CD4-positive, alpha-beta T cell (primary cell): ENCODE measurements at regions of chr3 and their contacts with region 1.

Region 1: DNA sequence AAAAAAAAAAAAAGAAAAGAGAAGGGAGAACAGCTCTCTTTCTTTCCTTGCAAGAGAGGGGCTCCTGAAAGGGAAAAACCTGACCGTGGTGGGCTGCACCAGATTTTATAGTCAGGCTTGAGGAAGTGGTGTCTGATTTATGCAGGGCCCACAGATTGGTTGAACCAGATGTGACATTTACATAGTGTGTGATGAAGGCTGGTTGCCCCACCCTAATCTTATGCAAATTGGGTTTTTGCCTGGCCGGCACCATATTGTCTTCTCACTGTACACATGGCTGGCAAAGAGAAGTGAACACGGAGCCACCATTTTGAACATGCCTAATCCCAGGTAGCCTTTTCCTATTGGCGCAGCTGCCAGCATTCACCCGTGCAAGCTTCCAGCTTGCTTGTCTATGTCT is 154.4 kb downstream of the OXSM start:
- DNase-seq: no peak
- ATAC-seq: no peak
- H3K4me3 ChIP-seq: no peak overlapping the region
- H3K4me3 Mint-ChIP-seq: no peak overlapping the region
- H3K27ac ChIP-seq: no peak overlapping the region
- H3K27ac Mint-ChIP-seq: no peak overlapping the region
- H3K4me1 ChIP-seq: no peaks in the 10 kb centered on the region
- H3K4me1 Mint-ChIP-seq: no peaks in the 10 kb centered on the region
- H3K27me3 ChIP-seq: no peaks in the 10 kb centered on the region
- H3K27me3 Mint-ChIP-seq: no peaks in the 10 kb centered on the region
- CTCF ChIP-seq: no peak

Region 2: GRCh38 chr3:26171006-26171405 is 226.7 kb after region 1 on chr3:
- CTCF ChIA-PET with region 1: no interaction called
- POLR2A ChIA-PET with region 1: no interaction called
- intact Hi-C with region 1: loop called in 1 of 2 experiments (anchors 5 kb)
- DNase-seq: no peak
- ATAC-seq: no peak
- H3K4me3 ChIP-seq: no peak overlapping the region
- H3K4me3 Mint-ChIP-seq: no peak overlapping the region
- H3K27ac ChIP-seq: no peak overlapping the region
- H3K27ac Mint-ChIP-seq: no peak overlapping the region
- H3K4me1 ChIP-seq: no peaks in the 10 kb centered on the region
- H3K4me1 Mint-ChIP-seq: no peaks in the 10 kb centered on the region
- H3K27me3 ChIP-seq: no peaks in the 10 kb centered on the region
- H3K27me3 Mint-ChIP-seq: no peaks in the 10 kb centered on the region
- CTCF ChIP-seq: no peak

Region 3: DNA sequence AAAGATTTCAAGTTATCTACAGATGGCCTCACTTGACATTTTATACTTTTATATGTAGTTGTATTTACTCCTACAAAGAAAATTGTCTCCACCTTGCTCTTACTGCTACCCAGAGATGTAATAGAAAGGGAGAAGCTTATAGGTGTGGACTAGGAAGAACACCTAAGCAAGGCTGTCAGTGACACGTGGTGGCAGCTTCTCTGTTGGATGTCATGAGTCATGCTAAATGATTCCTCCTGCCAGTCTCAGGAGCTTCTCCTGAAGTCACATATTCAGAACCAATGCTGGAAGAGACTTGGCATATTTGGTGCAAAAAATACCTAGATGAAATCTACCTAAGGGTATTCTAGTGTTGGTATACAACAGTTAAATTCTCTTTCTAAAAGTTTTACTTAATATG is 862.9 kb after region 1 on chr3:
- CTCF ChIA-PET with region 1: no interaction called
- POLR2A ChIA-PET with region 1: no interaction called
- intact Hi-C with region 1: no loop called
- DNase-seq: no peak
- ATAC-seq: no peak
- H3K4me3 ChIP-seq: no peak overlapping the region
- H3K4me3 Mint-ChIP-seq: no peak overlapping the region
- H3K27ac ChIP-seq: no peak overlapping the region
- H3K27ac Mint-ChIP-seq: no peak overlapping the region
- H3K4me1 ChIP-seq: no peaks in the 10 kb centered on the region
- H3K4me1 Mint-ChIP-seq: no peaks in the 10 kb centered on the region
- H3K27me3 ChIP-seq: no peaks in the 10 kb centered on the region
- H3K27me3 Mint-ChIP-seq: no peaks in the 10 kb centered on the region
- CTCF ChIP-seq: no peak